Activated B cell treated with CpG ODN at 0.5 μM for 24 hours (primary cell): ENCODE measurements at regions of chr3 and their contacts with region 1.

Region 1: DNA sequence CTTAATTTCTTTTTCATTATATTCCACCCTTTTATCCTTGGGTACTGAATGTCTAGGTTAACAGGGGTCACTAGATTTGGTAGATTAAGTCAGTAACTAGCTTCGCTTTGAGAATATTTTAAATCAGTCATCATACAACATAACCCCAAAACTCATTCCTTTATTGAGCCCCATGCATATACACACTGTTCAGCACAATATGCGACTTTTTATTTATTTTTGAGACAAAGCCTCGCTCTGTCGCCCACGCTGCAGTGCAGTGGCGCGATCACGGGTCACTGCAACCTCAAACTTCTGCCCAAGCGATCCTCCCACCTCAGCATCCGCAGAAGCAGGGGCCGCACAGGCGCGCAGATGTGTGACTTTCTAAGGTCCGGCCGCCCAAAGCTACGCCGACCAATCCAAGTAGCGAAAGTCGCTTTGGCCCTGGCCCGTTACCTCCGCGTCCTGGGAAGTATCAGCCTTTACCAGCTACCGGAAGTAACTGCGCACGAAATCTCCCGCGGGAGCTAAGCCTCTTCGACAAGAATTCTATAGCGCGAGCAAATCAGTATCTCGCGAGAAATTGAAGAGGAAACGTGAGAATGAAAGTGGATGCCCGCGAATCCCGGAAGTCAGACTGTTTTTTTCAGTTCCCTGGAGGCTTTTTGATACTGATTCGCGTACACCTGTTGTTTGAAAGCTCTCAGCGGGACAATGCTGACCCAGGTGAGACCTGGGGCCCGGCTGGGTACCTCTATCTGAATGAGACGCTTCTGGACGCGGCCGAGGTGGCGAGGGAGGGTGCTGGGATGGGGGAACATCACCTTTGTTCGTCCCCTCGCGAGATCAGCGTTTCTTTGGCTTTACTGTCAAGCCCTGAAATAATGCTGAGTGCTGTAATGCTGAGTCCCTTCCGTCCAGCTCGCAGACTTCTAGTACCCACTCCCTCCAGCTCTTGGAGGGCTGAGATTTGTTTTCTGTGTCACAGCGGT is at the starts of genes DHFR2 and NSUN3:
- DNase-seq: peak; percentile 74
- ATAC-seq: peak; percentile 88
- H3K4me3 Mint-ChIP-seq: peak within 1 kb of the TSS; percentile 98
- H3K27ac Mint-ChIP-seq: peak within 1 kb of the TSS; percentile 100
- H3K4me1 Mint-ChIP-seq: peaks cover 42% of the 10 kb centered on the region
- H3K27me3 Mint-ChIP-seq: no peaks in the 10 kb centered on the region
- CTCF ChIP-seq: no peak
- total RNA-seq, gene DHFR2: 4.3 and 5.0 TPM in 2 replicates
- total RNA-seq, gene NSUN3: 18.1 and 20.8 TPM in 2 replicates

Region 2: GRCh38 chr3:93979833-93980676 is 82.7 kb before region 1 on chr3 and contains the start of gene ARL13B:
- CTCF ChIA-PET with region 1: interaction called, 5 read pairs
- POLR2A ChIA-PET with region 1: interaction called, 16 read pairs
- intact Hi-C with region 1: loop called (anchors 1 kb)
- DNase-seq: peak; percentile 81
- ATAC-seq: peak; percentile 100
- H3K4me3 Mint-ChIP-seq: peak within 1 kb of the TSS; percentile 89
- H3K27ac Mint-ChIP-seq: peak within 1 kb of the TSS; percentile 89
- H3K4me1 Mint-ChIP-seq: peaks cover 14% of the 10 kb centered on the region
- H3K27me3 Mint-ChIP-seq: no peaks in the 10 kb centered on the region
- CTCF ChIP-seq: no peak
- total RNA-seq, gene ARL13B: 9.9 and 12.1 TPM in 2 replicates

Region 3: DNA sequence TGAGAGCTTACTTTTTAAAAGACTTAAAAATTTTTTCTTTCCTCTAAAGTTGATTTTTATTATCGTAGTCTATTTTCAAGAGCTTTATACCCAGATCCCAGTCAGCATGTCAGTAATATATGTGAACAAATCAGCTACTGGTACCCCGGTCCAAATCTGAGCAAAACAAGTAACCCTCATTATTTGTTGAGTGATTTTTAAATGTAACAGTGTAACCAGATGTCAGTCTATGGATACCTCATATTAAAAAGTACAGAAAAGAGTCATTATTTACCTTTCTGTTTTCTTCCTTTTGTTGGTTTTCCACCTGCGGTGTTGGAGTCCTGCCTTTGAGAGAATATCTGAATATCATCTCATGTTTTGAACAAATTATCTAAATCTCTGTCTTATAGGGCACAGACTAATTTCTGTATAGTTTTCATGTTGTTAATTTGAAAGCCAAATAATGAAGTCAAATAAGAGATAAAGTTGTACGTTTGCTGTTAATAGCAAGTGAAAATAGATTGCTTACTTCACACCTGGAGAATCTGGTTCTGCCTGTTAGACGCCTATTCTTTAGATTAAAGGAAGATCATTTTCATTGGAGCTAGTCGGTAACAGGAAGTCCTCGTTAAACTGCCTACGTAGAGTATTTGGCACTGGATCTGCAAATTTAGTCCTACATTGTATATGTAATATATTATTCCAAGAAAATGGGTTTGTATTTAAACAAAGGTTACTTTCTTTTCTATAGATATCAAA is 34.5 kb before region 1 on chr3 and contains the start of gene STX19:
- CTCF ChIA-PET with region 1: no interaction called
- POLR2A ChIA-PET with region 1: no interaction called
- intact Hi-C with region 1: no loop called
- DNase-seq: no peak
- ATAC-seq: no peak
- H3K4me3 Mint-ChIP-seq: no peak within 1 kb of the TSS
- H3K27ac Mint-ChIP-seq: no peak within 1 kb of the TSS
- H3K4me1 Mint-ChIP-seq: no peaks in the 10 kb centered on the region
- H3K27me3 Mint-ChIP-seq: no peaks in the 10 kb centered on the region
- CTCF ChIP-seq: no peak
- total RNA-seq, gene STX19: not detected in 2 replicates

Region 4: GRCh38 chr3:94043285-94043684 is 19.4 kb before region 1 on chr3:
- CTCF ChIA-PET with region 1: no interaction called
- POLR2A ChIA-PET with region 1: no interaction called
- intact Hi-C with region 1: no loop called
- DNase-seq: no peak
- ATAC-seq: no peak
- H3K4me3 Mint-ChIP-seq: no peak overlapping the region
- H3K27ac Mint-ChIP-seq: no peak overlapping the region
- H3K4me1 Mint-ChIP-seq: no peaks in the 10 kb centered on the region
- H3K27me3 Mint-ChIP-seq: no peaks in the 10 kb centered on the region
- CTCF ChIP-seq: no peak

Region 5: GRCh38 chr3:94092086-94092485 is 29.4 kb after region 1 on chr3:
- CTCF ChIA-PET with region 1: no interaction called
- POLR2A ChIA-PET with region 1: no interaction called
- intact Hi-C with region 1: no loop called
- DNase-seq: no peak
- ATAC-seq: no peak
- H3K4me3 Mint-ChIP-seq: no peak overlapping the region
- H3K27ac Mint-ChIP-seq: no peak overlapping the region
- H3K4me1 Mint-ChIP-seq: no peaks in the 10 kb centered on the region
- H3K27me3 Mint-ChIP-seq: no peaks in the 10 kb centered on the region
- CTCF ChIP-seq: no peak

Region 6: GRCh38 chr3:94356581-94356980 is 293.9 kb after region 1 on chr3:
- CTCF ChIA-PET with region 1: no interaction called
- POLR2A ChIA-PET with region 1: no interaction called
- intact Hi-C with region 1: no loop called
- DNase-seq: no peak
- ATAC-seq: no peak
- H3K4me3 Mint-ChIP-seq: no peak overlapping the region
- H3K27ac Mint-ChIP-seq: no peak overlapping the region
- H3K4me1 Mint-ChIP-seq: no peaks in the 10 kb centered on the region
- H3K27me3 Mint-ChIP-seq: no peaks in the 10 kb centered on the region
- CTCF ChIP-seq: no peak